ENCODE measurements at regions of chr20 and their contacts with region 1.

Region 1: GRCh38 chr20:49541733-49542513 is 26.0 kb downstream of the PTGIS start:
- DNase-seq: peak; percentile 39
- H3K4me3 ChIP-seq: no peak overlapping the region
- H3K27ac ChIP-seq: no peak overlapping the region
- H3K27me3 ChIP-seq: peaks cover 5% of the 10 kb centered on the region
- CTCF ChIP-seq: peak; percentile 75

Region 2: DNA sequence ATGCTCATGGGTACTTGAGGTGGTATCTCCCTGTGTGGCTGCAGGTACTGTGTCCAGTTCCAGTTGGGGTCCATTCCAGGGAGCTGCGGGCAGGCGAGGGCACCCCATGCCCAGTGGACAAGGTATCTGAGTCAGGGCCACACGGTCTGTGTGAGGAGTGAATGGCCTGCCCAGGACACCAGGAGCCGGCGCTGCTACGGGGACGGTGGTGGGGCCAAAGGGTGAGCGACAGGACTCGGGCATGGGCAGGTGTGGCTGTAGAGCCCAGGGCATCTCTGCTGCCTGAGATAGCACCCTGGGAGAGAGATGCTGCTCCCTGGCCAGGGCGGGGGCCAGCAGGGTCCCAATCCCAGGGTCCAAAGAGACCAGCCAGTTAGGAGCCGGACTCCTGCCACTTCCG is 206.4 kb before region 1 on chr20:
- CTCF ChIA-PET with region 1: interaction called, 15 read pairs
- POLR2A ChIA-PET with region 1: no interaction called
- DNase-seq: no peak
- H3K4me3 ChIP-seq: no peak overlapping the region
- H3K27ac ChIP-seq: no peak overlapping the region
- H3K27me3 ChIP-seq: peaks cover 21% of the 10 kb centered on the region
- CTCF ChIP-seq: no peak

Region 3: GRCh38 chr20:49559401-49560081 is 17.6 kb after region 1 on chr20:
- CTCF ChIA-PET with region 1: interaction called, 27 read pairs
- POLR2A ChIA-PET with region 1: no interaction called
- DNase-seq: no peak
- H3K4me3 ChIP-seq: no peak overlapping the region
- H3K27ac ChIP-seq: no peak overlapping the region
- H3K27me3 ChIP-seq: no peaks in the 10 kb centered on the region
- CTCF ChIP-seq: no peak

Region 4: DNA sequence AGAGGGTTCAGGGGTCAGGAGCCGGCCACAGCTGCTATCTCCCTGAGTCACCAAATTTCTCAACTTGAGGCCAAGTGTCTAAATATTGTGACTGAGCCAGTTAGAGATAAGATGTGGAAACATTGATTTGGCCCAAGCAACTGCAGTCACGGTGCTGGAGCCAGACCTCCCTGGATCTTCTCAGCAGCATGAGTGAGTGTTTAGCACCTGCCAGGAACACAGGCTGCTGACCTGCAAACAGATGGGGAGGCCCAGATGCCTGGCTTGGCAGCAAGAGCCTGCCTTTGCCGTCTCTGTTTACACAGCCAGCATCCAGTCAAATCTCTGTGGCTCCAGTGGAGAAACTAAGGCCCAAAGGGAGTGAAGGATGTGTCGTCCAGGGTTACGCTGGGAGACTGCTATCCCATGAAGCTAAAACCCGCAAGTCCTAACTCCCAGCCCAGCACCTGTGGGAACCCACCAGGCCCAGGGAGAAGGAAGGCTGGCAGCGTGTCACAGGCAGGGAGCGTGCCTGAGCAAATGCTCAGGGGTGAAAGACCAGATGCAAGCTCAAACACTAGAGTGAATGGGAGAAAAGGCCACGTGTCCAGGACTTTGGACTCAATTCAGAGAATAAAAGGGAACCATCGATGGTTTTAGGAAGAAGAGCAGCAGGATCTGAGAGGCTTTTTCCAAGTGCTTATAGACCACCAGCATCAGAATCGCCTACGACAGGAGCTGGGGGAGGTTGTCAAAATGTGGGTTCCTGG is 41.9 kb after region 1 on chr20:
- CTCF ChIA-PET with region 1: interaction called, 11 read pairs
- POLR2A ChIA-PET with region 1: no interaction called
- DNase-seq: peak; percentile 88
- H3K4me3 ChIP-seq: no peak overlapping the region
- H3K27ac ChIP-seq: peak overlapping the region; percentile 65
- H3K27me3 ChIP-seq: no peaks in the 10 kb centered on the region
- CTCF ChIP-seq: peak; percentile 12; the same call in 1 of the 2 replicates

Region 5: GRCh38 chr20:49594143-49594930 is 52.4 kb after region 1 on chr20:
- CTCF ChIA-PET with region 1: interaction called, 10 read pairs
- POLR2A ChIA-PET with region 1: no interaction called
- DNase-seq: peak; percentile 69
- H3K4me3 ChIP-seq: no peak overlapping the region
- H3K27ac ChIP-seq: peak overlapping the region; percentile 92
- H3K27me3 ChIP-seq: peaks cover 2% of the 10 kb centered on the region
- CTCF ChIP-seq: no peak

Region 6: GRCh38 chr20:49602345-49603208 is 60.7 kb after region 1 on chr20:
- CTCF ChIA-PET with region 1: interaction called, 258 read pairs
- POLR2A ChIA-PET with region 1: no interaction called
- DNase-seq: no peak
- H3K4me3 ChIP-seq: no peak overlapping the region
- H3K27ac ChIP-seq: no peak overlapping the region
- H3K27me3 ChIP-seq: no peaks in the 10 kb centered on the region
- CTCF ChIP-seq: no peak

Region 7: DNA sequence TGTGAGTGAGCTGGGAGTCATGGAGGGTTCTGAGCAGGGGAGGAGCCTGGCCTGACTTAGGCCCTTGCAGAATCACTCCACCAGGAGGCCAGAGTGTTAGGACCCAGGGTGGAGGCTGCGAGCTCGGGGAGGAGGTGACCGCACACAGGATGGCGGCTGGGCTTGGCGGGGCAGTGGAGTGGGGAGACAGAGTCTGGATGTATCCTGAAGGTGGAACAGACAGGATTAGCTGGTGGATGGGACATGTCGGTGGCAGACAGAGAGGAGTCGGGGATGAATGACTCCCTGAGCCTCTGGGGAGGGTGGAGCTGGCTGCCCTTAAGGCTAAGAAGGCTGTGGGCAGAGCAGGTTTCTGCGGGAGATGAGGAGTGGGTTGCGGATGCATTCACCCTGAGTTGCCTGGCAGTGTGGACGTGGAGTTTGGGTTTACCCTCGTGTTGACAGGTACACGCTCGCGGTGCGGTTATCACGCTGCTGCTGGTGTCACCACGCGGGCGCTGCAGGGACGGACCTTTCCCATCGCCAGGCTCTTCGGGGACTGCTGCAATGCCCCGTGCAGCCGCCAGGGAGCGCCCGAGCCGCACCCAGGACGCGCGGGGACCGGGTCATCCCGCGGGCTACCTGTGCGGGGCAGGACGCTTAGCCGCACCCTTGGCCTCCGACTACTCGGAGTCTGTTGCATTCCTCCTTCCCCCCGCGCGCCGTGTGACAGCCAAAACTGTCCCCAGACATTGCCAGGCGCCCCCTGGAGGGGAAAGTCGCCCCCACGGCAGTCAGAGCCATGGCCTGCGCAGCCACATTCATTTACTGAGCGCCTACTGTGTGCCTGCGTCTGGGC is 69.0 kb after region 1 on chr20:
- CTCF ChIA-PET with region 1: interaction called, 258 read pairs
- POLR2A ChIA-PET with region 1: interaction called, 5 read pairs
- DNase-seq: no peak
- H3K4me3 ChIP-seq: peak overlapping the region; percentile 29
- H3K27ac ChIP-seq: no peak overlapping the region
- H3K27me3 ChIP-seq: peaks cover 9% of the 10 kb centered on the region
- CTCF ChIP-seq: peak; percentile 99